ENCODE measurements at regions of chr15 and their contacts with region 1.

Region 1: DNA sequence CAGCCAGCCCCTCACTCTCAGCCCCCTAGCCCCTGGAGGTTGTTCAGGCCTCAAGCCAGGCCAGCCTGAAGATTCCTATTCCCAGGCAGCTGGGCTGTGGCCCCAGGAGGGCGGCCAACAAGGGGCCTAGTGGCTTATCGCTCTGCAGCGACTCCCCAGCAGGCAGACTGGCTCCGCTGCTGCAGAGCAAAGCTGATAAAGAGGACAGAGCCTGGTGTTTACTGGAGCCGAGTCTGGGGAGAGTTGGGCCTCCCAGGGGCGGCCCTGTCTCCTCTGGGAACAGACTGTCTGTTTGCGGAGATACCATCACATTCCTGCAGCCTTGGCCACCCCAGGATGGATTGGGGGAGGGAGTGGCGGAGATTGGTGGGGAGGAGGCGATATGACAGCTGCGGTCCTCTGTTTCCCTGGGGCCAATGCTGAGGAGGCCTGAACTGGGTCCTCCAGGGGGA is 22.4 kb upstream of the SMAD6 start:
- DNase-seq: peak in 1 of 2 experiments; percentile 71
- H3K4me3 ChIP-seq: no peak overlapping the region
- H3K27ac ChIP-seq: no peak overlapping the region
- H3K4me1 ChIP-seq: peaks cover 6 to 10% (median 9%) of the 10 kb centered on the region in 4 experiments
- H3K27me3 ChIP-seq: no peaks in the 10 kb centered on the region; a peak in 1 of 7 replicates
- CTCF ChIP-seq: no peak
- EP300 ChIP-seq: no peak
- POLR2A ChIP-seq: no peak
- RAD21 ChIP-seq: no peak; a peak in 1 of 4 replicates

Region 2: DNA sequence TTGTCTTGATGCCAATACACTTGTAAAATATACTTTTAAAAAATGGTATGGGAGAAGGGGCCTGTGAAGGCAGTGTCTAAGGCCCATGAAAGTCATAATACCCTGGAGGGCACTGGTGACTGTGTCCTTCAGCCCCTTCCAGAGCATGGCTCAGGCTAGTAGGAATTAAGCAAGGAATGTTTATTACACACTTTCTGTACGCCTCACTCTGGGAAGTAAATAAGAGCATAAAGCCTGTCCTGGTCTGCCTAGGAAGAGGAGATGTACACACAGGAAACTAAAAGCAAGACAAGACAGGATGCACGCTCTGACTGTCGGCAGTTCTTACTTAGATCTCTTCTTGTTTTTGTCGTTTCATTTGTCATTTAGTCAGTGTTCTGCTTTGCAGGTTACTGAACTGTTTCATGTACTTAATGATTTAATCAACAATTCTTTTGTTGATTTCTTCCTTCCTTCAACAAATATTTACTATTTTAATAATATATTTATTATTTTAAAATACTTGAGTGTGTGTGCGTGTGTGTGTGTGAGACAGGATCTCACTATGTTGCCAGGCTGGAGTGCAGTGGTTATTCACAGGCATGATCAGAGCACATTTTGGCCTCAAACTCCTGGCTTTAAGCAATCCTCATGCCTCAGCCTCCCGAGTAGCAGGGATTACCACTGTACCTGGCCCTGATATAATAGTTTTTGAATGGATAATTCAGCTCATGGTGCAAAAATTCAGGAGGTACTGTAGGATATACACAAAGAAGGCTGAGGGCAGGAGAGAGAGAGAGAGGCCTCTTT is 13.3 kb after region 1 on chr15:
- CTCF ChIA-PET with region 1: interaction called, 88 read pairs
- POLR2A ChIA-PET with region 1: interaction called, 3 read pairs
- DNase-seq: no peak
- H3K4me3 ChIP-seq: no peak overlapping the region
- H3K27ac ChIP-seq: no peak overlapping the region
- H3K4me1 ChIP-seq: no peaks in the 10 kb centered on the region
- H3K27me3 ChIP-seq: no peaks in the 10 kb centered on the region
- CTCF ChIP-seq: no peak
- EP300 ChIP-seq: no peak
- POLR2A ChIP-seq: no peak
- RAD21 ChIP-seq: no peak